ENCODE measurements at regions of chr20 and their contacts with region 1.

Region 1: GRCh38 chr20:59441860-59442845 is 141.7 kb downstream of the EDN3 start:
- DNase-seq: no peak
- H3K4me3 ChIP-seq: no peak overlapping the region
- H3K27ac ChIP-seq: no peak overlapping the region
- H3K4me1 ChIP-seq: peaks cover 0 to 3% (median 0%) of the 10 kb centered on the region in 4 experiments; a peak in 2 of 7 replicates
- H3K27me3 ChIP-seq: no peaks in the 10 kb centered on the region; a peak in 1 of 7 replicates
- CTCF ChIP-seq: no peak
- EP300 ChIP-seq: no peak
- POLR2A ChIP-seq: no peak
- RAD21 ChIP-seq: no peak

Region 2: DNA sequence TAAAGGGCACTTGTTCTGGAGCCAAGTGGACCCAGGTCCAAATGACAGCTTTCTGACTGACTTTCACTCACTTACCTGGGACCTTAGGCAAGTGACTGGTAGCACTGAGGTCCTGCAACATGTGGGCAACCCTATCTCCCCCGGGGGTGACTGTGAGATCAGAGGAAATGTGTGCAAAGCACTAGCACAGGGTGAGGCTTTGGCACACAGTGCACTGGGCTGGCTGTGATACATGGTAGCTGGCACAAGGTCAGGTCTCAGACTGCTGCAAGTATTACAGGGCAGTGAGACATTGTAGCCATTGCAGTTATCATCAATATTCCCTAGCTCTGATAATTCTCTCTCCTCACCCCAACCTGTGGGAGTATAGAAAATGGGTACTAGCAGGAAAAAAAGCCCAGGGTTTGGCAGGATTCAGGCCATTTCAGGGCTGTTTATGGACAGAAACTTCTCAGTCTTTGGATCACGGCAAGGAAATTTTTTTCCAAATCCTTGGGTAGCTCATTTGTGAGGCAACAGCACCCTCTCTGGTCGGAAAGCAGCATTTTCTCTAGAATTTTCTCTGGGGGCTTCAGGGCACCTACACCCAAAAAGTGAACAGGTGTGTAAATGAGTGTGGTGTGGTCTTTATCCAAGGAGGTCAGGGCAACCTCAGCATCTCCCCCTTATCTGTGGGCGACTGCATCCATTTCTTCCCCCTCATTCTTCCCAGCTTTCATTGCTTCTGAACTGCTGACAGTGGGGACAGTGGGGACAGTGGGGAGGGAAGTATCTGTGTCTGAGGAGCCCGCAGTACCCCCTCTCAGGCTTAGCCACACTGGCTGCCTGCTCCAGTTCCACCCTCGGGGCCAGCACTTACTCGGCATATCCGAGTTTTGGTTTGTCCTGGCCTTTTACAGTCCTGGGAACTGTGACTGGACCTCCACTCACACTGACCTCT is 13.5 kb after region 1 on chr20:
- CTCF ChIA-PET with region 1: interaction called, 33 read pairs
- POLR2A ChIA-PET with region 1: no interaction called
- DNase-seq: peak in 1 of 2 experiments; percentile 50
- H3K4me3 ChIP-seq: no peak overlapping the region
- H3K27ac ChIP-seq: no peak overlapping the region
- H3K4me1 ChIP-seq: no peaks in the 10 kb centered on the region; a peak in 3 of 7 replicates
- H3K27me3 ChIP-seq: no peaks in the 10 kb centered on the region
- CTCF ChIP-seq: peak in 2 of 3 experiments; percentile 69 to 73; a peak in 3 of 4 replicates
- EP300 ChIP-seq: no peak
- POLR2A ChIP-seq: no peak
- RAD21 ChIP-seq: peak; percentile 87 to 91

Region 3: GRCh38 chr20:59705651-59706399 is 263.7 kb after region 1 on chr20:
- CTCF ChIA-PET with region 1: no interaction called
- POLR2A ChIA-PET with region 1: no interaction called
- DNase-seq: no peak
- H3K4me3 ChIP-seq: no peak overlapping the region
- H3K27ac ChIP-seq: no peak overlapping the region
- H3K4me1 ChIP-seq: no peaks in the 10 kb centered on the region
- H3K27me3 ChIP-seq: no peaks in the 10 kb centered on the region
- CTCF ChIP-seq: no peak
- EP300 ChIP-seq: no peak
- POLR2A ChIP-seq: no peak
- RAD21 ChIP-seq: no peak

Measured in H1 (cell line).